Tibial artery (tissue), 4 donors: ENCODE measurements at regions of chr7 and their contacts with region 1.

Region 1: GRCh38 chr7:55132890-55133551 is 114.2 kb downstream of the EGFR start:
- DNase-seq: peak; percentile 64 to 81
- H3K4me3 ChIP-seq: no peak overlapping the region
- H3K27ac ChIP-seq: peak overlapping the region; percentile 63 to 85
- H3K4me1 ChIP-seq: peaks cover 0 to 65% (median 58%) of the 10 kb centered on the region in 4 donors
- H3K27me3 ChIP-seq: no peaks in the 10 kb centered on the region
- CTCF ChIP-seq: no peak

Region 2: DNA sequence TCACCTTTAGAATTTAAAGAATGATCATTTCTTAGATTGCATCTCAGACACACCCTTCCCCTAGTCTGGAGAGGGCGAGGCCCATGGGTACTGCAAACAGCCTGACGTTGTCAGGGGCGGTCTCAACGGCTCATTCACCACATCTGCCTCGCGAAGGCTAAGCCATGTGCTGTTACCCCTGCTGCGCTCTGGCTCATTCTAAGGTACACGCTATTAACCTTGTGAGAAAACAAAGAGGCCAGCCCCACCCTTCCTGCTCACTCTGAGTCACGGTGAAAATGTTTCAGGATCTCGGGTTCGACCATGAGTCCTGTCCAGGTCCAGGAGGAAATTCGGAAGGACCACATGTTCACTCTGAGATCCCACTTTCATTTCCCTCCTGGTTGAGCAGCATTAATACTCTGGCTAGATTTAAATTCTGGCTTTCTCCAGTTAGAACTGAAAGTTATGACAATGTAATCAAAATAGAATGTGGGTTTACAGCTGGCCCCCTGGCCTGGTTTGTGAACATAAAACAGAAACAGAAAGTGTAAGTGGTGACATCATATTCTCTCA is 59.0 kb before region 1 on chr7:
- intact Hi-C with region 1: loop called (anchors 10 kb)
- DNase-seq: no peak
- H3K4me3 ChIP-seq: peak overlapping the region; percentile 4 to 17
- H3K27ac ChIP-seq: peak overlapping the region; percentile 39 to 60
- H3K4me1 ChIP-seq: peaks cover 0 to 64% (median 29%) of the 10 kb centered on the region in 4 donors
- H3K27me3 ChIP-seq: no peaks in the 10 kb centered on the region
- CTCF ChIP-seq: no peak